HepG2 (cell line): ENCODE measurements at regions of chr1 and their contacts with region 1.

Region 1: GRCh38 chr1:230104395-230105244 is 37.6 kb downstream of the GALNT2 start:
- DNase-seq: peak; percentile 92
- ATAC-seq: peak; percentile 74
- H3K4me3 ChIP-seq: peak overlapping the region; percentile 41 to 67 (median 54)
- H3K27ac ChIP-seq: peak overlapping the region; percentile 82
- H3K4me1 ChIP-seq: peaks cover 70% of the 10 kb centered on the region
- H3K27me3 ChIP-seq: no peaks in the 10 kb centered on the region
- CTCF ChIP-seq: peak; percentile 36
- EP300 ChIP-seq: peak; percentile 46 to 75; a peak in 3 of 4 replicates
- POLR2A ChIP-seq: peak in 1 of 2 experiments; percentile 3; a peak in 1 of 4 replicates
- RAD21 ChIP-seq: no peak; the same call in 1 of the 2 replicates

Region 2: DNA sequence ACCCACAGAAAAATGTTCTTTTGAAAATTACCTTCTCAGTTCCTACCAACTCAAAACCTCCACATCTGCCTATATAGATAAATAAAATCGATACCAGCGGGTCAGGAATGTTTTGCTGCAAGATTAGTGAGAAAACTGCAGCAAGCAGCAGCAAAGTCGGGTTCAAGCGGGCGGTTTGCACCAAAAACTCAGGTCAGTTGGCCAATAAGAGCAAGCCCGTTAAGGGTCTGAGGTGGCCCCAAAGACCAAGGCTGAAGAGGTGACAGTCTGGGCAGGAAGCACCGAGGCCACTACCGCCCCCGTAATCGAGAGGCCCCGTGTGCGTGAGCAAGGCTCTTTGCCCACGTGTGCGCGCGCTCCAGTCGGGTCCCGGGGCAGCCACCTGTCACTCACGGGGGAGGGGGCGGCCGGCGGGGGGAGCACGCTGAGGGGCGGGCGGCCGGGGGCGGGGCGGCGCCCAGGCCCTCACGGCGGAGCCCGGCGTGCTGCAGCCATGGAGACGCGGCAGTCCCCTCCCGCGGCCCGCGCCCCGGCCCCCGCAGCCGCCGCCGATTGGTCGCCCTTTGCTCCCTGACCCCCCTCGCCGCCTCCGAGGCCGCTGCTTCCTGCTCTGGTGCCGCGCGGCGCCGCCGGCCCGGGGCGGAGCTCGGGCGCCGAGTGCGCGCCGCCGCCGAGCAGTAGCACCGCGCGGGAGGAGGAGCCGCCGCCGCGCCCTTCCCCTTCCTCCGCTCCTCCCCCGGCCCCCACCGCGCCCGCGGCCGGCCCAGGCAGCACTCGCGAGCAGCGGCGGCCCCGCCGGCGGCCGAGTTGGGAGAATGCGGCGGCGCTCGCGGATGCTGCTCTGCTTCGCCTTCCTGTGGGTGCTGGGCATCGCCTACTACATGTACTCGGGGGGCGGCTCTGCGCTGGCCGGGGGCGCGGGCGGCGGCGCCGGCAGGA is 37.9 kb before region 1 on chr1 and contains the start of gene GALNT2:
- CTCF ChIA-PET with region 1: no interaction called
- POLR2A ChIA-PET with region 1: interaction called, 6 read pairs
- in situ Hi-C with region 1: no loop called
- intact Hi-C with region 1: loop called (anchors 1 kb)
- DNase-seq: peak; percentile 80
- ATAC-seq: peak; percentile 84
- H3K4me3 ChIP-seq: peak within 1 kb of the TSS; percentile 84 to 93 (median 88)
- H3K27ac ChIP-seq: peak within 1 kb of the TSS; percentile 78
- H3K4me1 ChIP-seq: peaks cover 40% of the 10 kb centered on the region
- H3K27me3 ChIP-seq: no peaks in the 10 kb centered on the region
- CTCF ChIP-seq: peak; percentile 13; the same call in 1 of the 2 replicates
- EP300 ChIP-seq: no peak
- POLR2A ChIP-seq: peak; percentile 42 to 69; a peak in 2 of 4 replicates
- RAD21 ChIP-seq: peak; percentile 57; the same call in 1 of the 2 replicates
- total RNA-seq, gene GALNT2: 18.1 and 39.6 TPM in 2 replicates

Region 3: GRCh38 chr1:230090194-230090711 is 14.4 kb before region 1 on chr1:
- CTCF ChIA-PET with region 1: no interaction called
- POLR2A ChIA-PET with region 1: interaction called, 13 read pairs
- in situ Hi-C with region 1: no loop called
- intact Hi-C with region 1: loop called (anchors 1 kb)
- DNase-seq: peak; percentile 53
- ATAC-seq: peak; percentile 70
- H3K4me3 ChIP-seq: no peak overlapping the region
- H3K27ac ChIP-seq: no peak overlapping the region
- H3K4me1 ChIP-seq: peaks cover 16% of the 10 kb centered on the region
- H3K27me3 ChIP-seq: no peaks in the 10 kb centered on the region
- CTCF ChIP-seq: no peak
- EP300 ChIP-seq: peak in 1 of 2 experiments; percentile 56; a peak in 1 of 4 replicates
- POLR2A ChIP-seq: no peak
- RAD21 ChIP-seq: no peak

Region 4: DNA sequence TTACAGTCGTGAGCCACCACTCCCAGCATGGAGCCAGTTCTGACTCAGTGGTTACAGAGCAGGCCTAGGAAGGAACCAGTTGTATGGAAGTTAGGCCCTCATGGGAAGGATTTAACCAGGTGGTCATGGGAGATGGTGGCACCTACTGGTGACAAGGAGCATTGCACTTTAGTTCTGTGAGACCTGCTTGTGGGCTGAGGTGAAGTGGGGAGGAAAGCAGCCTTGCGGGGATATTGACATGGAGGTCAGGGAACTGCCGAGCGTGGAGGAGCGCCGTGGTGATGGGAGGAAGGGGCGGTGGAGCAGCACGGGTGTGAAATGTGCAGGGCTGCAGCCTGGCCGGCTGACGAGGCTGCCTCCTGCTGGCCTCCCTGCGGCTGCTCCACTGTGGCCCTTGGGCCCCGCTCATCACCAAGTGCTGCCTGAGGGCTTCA is 62.8 kb after region 1 on chr1:
- CTCF ChIA-PET with region 1: no interaction called
- POLR2A ChIA-PET with region 1: interaction called, 3 read pairs
- in situ Hi-C with region 1: no loop called
- intact Hi-C with region 1: loop called (anchors 1 kb)
- DNase-seq: peak; percentile 49
- ATAC-seq: peak; percentile 70
- H3K4me3 ChIP-seq: no peak overlapping the region
- H3K27ac ChIP-seq: no peak overlapping the region
- H3K4me1 ChIP-seq: peaks cover 18% of the 10 kb centered on the region
- H3K27me3 ChIP-seq: no peaks in the 10 kb centered on the region
- CTCF ChIP-seq: peak; percentile 84
- EP300 ChIP-seq: no peak
- POLR2A ChIP-seq: no peak
- RAD21 ChIP-seq: peak; percentile 85